CD4-positive, alpha-beta T cell (primary cell): ENCODE measurements at regions of chr5 and their contacts with region 1.

Region 1: DNA sequence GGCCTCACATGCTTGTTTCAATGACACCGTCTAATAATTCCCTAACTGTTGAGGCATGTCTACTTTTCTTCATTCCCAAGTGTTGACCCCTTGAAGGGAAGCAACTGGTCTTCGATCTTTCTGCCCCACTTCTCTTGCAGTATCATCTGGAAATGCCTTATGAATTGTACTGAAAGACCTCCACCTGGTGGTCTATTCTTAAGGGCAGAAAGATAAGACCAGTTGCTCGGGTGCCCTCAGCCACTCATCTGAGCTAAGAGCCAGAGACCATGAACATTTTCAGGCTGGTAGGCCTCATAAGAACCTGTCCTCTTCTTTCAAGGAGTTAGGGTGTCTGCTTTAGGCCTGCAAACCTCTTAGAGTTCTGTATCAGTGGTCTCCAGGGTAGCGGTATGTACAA is 542.5 kb downstream of the CTNND2 start:
- DNase-seq: no peak
- ATAC-seq: no peak
- H3K4me3 ChIP-seq: no peak overlapping the region
- H3K4me3 Mint-ChIP-seq: no peak overlapping the region
- H3K27ac ChIP-seq: no peak overlapping the region
- H3K27ac Mint-ChIP-seq: no peak overlapping the region
- H3K4me1 ChIP-seq: no peaks in the 10 kb centered on the region
- H3K4me1 Mint-ChIP-seq: no peaks in the 10 kb centered on the region
- H3K27me3 ChIP-seq: no peaks in the 10 kb centered on the region
- H3K27me3 Mint-ChIP-seq: peaks cover 14% of the 10 kb centered on the region
- CTCF ChIP-seq: no peak

Region 2: DNA sequence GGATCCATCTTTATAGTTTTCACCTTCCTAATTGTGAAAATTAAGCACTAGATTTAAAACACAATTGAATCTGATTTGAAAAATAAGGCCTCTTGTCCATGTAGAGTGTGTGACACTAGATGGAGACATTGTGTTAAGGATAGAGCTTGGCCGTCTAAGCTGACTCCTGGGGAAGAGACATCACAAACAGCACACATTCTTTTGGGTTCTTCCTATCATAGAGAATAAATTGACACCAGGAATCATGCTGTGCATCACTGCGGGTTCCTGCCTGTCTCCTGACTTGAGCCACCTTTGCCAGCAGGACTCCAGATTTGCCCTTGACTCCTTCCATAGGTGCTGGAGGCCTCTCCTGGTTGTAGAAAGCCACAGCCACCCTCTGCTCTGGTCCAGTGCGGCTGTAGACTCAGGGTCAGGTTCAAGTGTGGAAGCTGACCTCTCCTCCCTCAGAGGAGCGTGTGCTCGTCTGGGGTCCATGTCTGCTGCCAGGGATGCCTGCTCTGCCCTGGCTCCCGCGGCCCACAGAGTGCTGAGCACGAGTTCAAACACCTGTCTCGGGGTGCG is 908.9 kb before region 1 on chr5:
- CTCF ChIA-PET with region 1: no interaction called
- POLR2A ChIA-PET with region 1: no interaction called
- intact Hi-C with region 1: loop called in 1 of 2 experiments (anchors 10 kb)
- DNase-seq: peak in 4 of 14 experiments; percentile 23 to 79 (median 76)
- ATAC-seq: peak; percentile 67
- H3K4me3 ChIP-seq: no peak overlapping the region
- H3K4me3 Mint-ChIP-seq: no peak overlapping the region
- H3K27ac ChIP-seq: no peak overlapping the region
- H3K27ac Mint-ChIP-seq: no peak overlapping the region
- H3K4me1 ChIP-seq: peaks cover 3% of the 10 kb centered on the region
- H3K4me1 Mint-ChIP-seq: peaks cover 12% of the 10 kb centered on the region
- H3K27me3 ChIP-seq: no peaks in the 10 kb centered on the region
- H3K27me3 Mint-ChIP-seq: no peaks in the 10 kb centered on the region
- CTCF ChIP-seq: peak; percentile 59

Region 3: GRCh38 chr5:11143456-11144267 is 218.1 kb before region 1 on chr5:
- CTCF ChIA-PET with region 1: no interaction called
- POLR2A ChIA-PET with region 1: no interaction called
- intact Hi-C with region 1: no loop called
- DNase-seq: no peak
- ATAC-seq: no peak
- H3K4me3 ChIP-seq: no peak overlapping the region
- H3K4me3 Mint-ChIP-seq: no peak overlapping the region
- H3K27ac ChIP-seq: no peak overlapping the region
- H3K27ac Mint-ChIP-seq: no peak overlapping the region
- H3K4me1 ChIP-seq: no peaks in the 10 kb centered on the region
- H3K4me1 Mint-ChIP-seq: no peaks in the 10 kb centered on the region
- H3K27me3 ChIP-seq: no peaks in the 10 kb centered on the region
- H3K27me3 Mint-ChIP-seq: no peaks in the 10 kb centered on the region
- CTCF ChIP-seq: no peak